ENCODE measurements at regions of chr3 and their contacts with region 1.

Region 1: GRCh38 chr3:34260271-34261006 is 462.0 kb downstream of the PDCD6IP start:
- DNase-seq: no peak
- ATAC-seq: peak; percentile 76
- H3K4me3 ChIP-seq: no peak overlapping the region
- H3K27ac ChIP-seq: no peak overlapping the region
- H3K4me1 ChIP-seq: no peaks in the 10 kb centered on the region
- H3K27me3 ChIP-seq: no peaks in the 10 kb centered on the region
- CTCF ChIP-seq: peak; percentile 67 to 71 (median 68)
- EP300 ChIP-seq: no peak
- POLR2A ChIP-seq: no peak
- RAD21 ChIP-seq: peak; percentile 74

Region 2: DNA sequence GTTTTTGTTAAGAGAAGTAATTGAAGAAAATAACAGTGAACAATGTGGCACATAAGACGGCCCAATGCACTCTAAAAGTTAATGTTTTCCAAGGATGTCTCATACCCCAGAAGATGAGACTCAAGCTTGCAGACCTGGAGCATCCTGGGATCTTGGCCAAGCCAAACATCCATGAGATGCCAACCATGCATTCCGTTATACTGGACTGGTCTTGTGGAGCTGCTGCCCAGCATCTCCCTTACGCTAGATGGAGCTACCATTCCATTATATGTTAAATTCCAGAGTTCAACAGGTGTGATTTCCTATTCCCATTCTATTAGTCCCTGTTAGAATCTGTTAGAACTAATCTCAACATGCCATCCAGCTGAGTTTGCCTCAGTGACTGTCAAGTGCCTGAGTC is 280.2 kb before region 1 on chr3:
- CTCF ChIA-PET with region 1: interaction called, 11 read pairs
- POLR2A ChIA-PET with region 1: no interaction called
- RAD21 ChIA-PET with region 1: interaction called, 4 read pairs
- SMC1A ChIA-PET with region 1: interaction called, 9 read pairs
- in situ Hi-C with region 1: no loop called
- intact Hi-C with region 1: no loop called
- DNase-seq: peak; percentile 11
- ATAC-seq: peak; percentile 68
- H3K4me3 ChIP-seq: no peak overlapping the region
- H3K27ac ChIP-seq: no peak overlapping the region
- H3K4me1 ChIP-seq: no peaks in the 10 kb centered on the region
- H3K27me3 ChIP-seq: no peaks in the 10 kb centered on the region
- CTCF ChIP-seq: peak; percentile 50 to 56 (median 51); a peak in 5 of 6 replicates
- EP300 ChIP-seq: no peak
- POLR2A ChIP-seq: no peak
- RAD21 ChIP-seq: peak; percentile 67

Region 3: DNA sequence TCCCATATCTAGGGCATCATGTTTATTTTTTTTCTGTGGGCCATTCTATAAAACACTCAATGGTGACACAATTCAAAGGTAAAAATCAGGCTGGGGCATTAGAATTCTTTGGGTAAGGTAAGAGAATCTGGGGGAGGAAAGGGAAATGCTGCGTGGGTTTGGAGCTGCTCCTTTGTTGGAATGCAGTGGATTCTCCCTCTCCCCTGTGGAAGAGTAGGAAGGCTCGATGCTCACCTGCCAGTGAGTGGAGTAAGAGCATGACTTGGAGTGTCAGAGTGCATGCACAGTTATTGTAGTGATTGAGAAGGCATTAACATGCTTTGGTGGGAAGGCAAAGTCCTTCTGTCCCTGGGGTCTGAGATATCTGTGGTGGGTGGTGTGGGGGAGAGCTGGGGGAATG is 182.0 kb before region 1 on chr3:
- CTCF ChIA-PET with region 1: no interaction called
- POLR2A ChIA-PET with region 1: no interaction called
- RAD21 ChIA-PET with region 1: no interaction called
- SMC1A ChIA-PET with region 1: no interaction called
- in situ Hi-C with region 1: no loop called
- intact Hi-C with region 1: no loop called
- DNase-seq: no peak
- ATAC-seq: no peak
- H3K4me3 ChIP-seq: no peak overlapping the region
- H3K27ac ChIP-seq: no peak overlapping the region
- H3K4me1 ChIP-seq: peaks cover 21% of the 10 kb centered on the region
- H3K27me3 ChIP-seq: no peaks in the 10 kb centered on the region
- CTCF ChIP-seq: no peak
- EP300 ChIP-seq: no peak
- POLR2A ChIP-seq: no peak
- RAD21 ChIP-seq: no peak

Region 4: DNA sequence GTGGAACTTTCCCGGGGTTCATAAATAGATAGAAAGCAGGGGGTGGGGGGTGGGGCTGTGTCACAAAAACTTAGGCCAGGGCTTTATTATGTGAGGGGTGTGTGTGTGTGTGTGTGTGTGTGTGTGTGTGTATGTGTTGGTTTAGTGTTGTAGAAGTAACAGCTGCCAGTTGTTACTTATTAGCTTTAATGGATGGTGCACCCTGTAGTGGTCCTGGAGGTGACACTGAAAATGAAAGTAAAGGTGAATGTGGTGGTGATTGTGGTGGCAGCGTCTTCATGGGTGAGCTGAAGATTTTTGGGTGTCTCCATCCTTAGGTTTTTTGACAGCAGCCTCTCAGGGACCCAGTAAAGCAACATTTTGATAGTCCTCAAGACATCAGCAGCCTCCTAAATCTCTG is 12.1 kb before region 1 on chr3:
- CTCF ChIA-PET with region 1: interaction called, 50 read pairs
- POLR2A ChIA-PET with region 1: no interaction called
- RAD21 ChIA-PET with region 1: interaction called, 13 read pairs
- SMC1A ChIA-PET with region 1: interaction called, 21 read pairs
- in situ Hi-C with region 1: no loop called
- intact Hi-C with region 1: no loop called
- DNase-seq: peak; percentile 42
- ATAC-seq: peak; percentile 94
- H3K4me3 ChIP-seq: no peak overlapping the region
- H3K27ac ChIP-seq: no peak overlapping the region
- H3K4me1 ChIP-seq: 0 out of 2 replicates have a peak, but pooled peaks cover 3% of the 10 kb centered on the region
- H3K27me3 ChIP-seq: no peaks in the 10 kb centered on the region
- CTCF ChIP-seq: no peak
- EP300 ChIP-seq: no peak
- POLR2A ChIP-seq: no peak
- RAD21 ChIP-seq: no peak

Region 5: DNA sequence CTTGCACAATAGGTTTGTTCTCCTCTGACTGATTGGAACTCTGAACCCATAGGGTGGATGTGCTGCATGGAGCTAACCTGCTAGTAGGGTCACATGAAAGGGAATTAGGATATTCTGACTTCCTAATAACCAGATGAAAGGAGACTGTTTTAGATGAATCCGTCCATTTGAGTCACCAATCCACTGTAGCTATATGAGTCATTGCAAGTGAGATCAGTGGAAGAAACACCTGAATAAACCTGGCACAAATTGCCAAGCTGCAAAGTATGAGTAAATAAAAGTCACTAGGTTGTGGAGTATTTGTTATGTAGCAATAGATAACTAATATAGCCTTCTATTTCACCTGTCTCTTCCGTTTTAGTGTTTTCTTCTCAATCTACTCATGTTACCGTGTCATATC is 122.4 kb after region 1 on chr3:
- CTCF ChIA-PET with region 1: interaction called, 14 read pairs
- POLR2A ChIA-PET with region 1: no interaction called
- RAD21 ChIA-PET with region 1: interaction called, 5 read pairs
- SMC1A ChIA-PET with region 1: interaction called, 11 read pairs
- in situ Hi-C with region 1: no loop called
- intact Hi-C with region 1: no loop called
- DNase-seq: no peak
- ATAC-seq: no peak
- H3K4me3 ChIP-seq: no peak overlapping the region
- H3K27ac ChIP-seq: no peak overlapping the region
- H3K4me1 ChIP-seq: no peaks in the 10 kb centered on the region
- H3K27me3 ChIP-seq: no peaks in the 10 kb centered on the region
- CTCF ChIP-seq: no peak
- EP300 ChIP-seq: no peak
- POLR2A ChIP-seq: no peak
- RAD21 ChIP-seq: no peak

Region 6: DNA sequence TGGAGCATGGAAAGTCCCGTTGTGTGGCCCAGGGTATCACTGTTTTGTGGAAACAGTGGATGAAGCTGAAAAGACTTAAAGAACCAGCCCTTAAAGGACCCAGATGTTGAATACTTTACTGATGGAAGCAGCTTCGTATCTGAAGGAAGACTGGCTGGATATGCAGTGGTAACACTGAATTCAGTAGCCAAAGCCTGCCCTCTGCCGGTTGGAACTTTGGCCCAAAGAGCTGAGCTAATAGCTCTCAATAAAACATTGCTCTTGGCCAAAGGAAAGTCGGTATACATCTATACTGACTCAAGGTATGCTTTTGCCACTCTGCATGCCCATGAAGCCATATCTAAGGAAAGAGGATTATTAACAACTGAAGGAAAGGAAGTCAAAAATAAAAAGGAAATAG is 423.4 kb after region 1 on chr3:
- CTCF ChIA-PET with region 1: interaction called, 106 read pairs
- POLR2A ChIA-PET with region 1: no interaction called
- RAD21 ChIA-PET with region 1: interaction called, 65 read pairs
- SMC1A ChIA-PET with region 1: interaction called, 65 read pairs
- in situ Hi-C with region 1: loop called (anchors 5 kb)
- intact Hi-C with region 1: loop called (anchors 1 kb)
- DNase-seq: peak; percentile 9
- ATAC-seq: peak; percentile 87
- H3K4me3 ChIP-seq: no peak overlapping the region
- H3K27ac ChIP-seq: no peak overlapping the region
- H3K4me1 ChIP-seq: no peaks in the 10 kb centered on the region
- H3K27me3 ChIP-seq: no peaks in the 10 kb centered on the region
- CTCF ChIP-seq: peak; percentile 51 to 68 (median 65); a peak in 5 of 6 replicates
- EP300 ChIP-seq: no peak
- POLR2A ChIP-seq: no peak
- RAD21 ChIP-seq: peak; percentile 70

Measured in GM12878 (cell line).